ENCODE measurements at regions of chr12 and their contacts with region 1.

Region 1: DNA sequence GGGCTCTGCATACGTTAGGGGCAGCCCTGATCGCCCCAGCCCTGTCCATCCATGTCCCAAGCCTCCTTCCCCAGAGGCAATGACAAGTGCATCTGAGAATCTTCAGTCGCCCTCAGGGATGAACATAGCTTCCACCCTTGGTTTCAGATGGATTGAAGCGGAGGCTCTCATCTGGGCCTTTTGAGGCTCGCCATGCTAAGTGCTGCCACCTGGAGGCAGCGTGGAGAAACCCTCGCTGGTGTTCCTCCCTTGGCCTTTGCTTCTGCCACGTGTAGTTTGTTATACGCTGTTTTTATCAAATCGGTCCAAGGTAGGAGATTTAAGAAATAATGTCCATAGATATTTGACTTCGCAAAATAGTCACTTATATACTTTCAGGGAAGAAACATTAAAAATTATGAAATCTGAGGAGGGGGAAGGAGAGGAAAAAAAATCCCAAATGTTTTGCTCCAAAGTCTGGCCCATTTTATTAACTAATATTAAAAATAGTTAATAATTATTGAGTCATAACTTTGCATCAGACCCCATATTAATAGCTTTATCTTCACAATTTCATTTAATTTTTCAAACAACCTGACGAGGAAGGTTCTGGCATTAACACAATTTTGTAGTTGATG is 28.8 kb upstream of the LRRC10 start:
- DNase-seq: peak; percentile 3
- H3K4me3 ChIP-seq: no peak overlapping the region
- CTCF ChIP-seq: peak; percentile 89

Region 2: GRCh38 chr12:69359531-69360347 is 279.8 kb before region 1 on chr12 and contains the start of gene YEATS4:
- CTCF ChIA-PET with region 1: interaction called, 99 read pairs
- POLR2A ChIA-PET with region 1: no interaction called
- DNase-seq: peak; percentile 55
- H3K4me3 ChIP-seq: peak within 1 kb of the TSS; percentile 93
- CTCF ChIP-seq: no peak

Region 3: GRCh38 chr12:69610126-69610525 is 29.4 kb before region 1 on chr12:
- CTCF ChIA-PET with region 1: interaction called, 166 read pairs
- POLR2A ChIA-PET with region 1: no interaction called
- DNase-seq: no peak
- H3K4me3 ChIP-seq: no peak overlapping the region
- CTCF ChIP-seq: no peak

Region 4: DNA sequence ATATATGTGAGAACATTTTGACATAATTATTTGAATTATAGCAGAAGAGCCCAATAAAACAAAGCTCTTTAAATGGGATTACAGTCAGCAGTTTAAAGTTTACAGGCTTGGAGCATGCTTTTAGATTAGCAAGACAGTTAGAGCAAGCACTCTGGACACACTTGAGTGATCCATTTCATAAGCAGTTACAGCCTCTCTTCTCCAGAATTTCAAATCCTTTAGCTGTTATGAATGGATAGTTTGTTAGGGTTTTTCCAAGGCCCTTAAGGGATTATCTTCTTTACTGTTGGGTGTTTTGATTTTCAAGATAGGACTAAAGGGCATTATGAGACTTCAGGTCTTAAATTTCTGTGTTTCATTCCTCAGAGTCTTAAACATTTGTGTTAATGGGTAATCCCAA is 23.3 kb after region 1 on chr12:
- CTCF ChIA-PET with region 1: interaction called, 12 read pairs
- POLR2A ChIA-PET with region 1: no interaction called
- DNase-seq: no peak
- H3K4me3 ChIP-seq: no peak overlapping the region
- CTCF ChIP-seq: no peak